Activated T-helper 1 cell treated with anti-CD3 and anti-CD28 coated beads, Interleukin-12 subunit alpha, Interleukin-12 subunit beta, Interleukin-2, Interleukin-4 antibody, amounts not matched to agents 30 ng/mL and 10 ng/mL and 1 ng/mL, durations not matched to agents 14 hours and 24 hours and 36 hours (primary cell): ENCODE measurements at regions of chr1 and their contacts with region 1.

Region 1: DNA sequence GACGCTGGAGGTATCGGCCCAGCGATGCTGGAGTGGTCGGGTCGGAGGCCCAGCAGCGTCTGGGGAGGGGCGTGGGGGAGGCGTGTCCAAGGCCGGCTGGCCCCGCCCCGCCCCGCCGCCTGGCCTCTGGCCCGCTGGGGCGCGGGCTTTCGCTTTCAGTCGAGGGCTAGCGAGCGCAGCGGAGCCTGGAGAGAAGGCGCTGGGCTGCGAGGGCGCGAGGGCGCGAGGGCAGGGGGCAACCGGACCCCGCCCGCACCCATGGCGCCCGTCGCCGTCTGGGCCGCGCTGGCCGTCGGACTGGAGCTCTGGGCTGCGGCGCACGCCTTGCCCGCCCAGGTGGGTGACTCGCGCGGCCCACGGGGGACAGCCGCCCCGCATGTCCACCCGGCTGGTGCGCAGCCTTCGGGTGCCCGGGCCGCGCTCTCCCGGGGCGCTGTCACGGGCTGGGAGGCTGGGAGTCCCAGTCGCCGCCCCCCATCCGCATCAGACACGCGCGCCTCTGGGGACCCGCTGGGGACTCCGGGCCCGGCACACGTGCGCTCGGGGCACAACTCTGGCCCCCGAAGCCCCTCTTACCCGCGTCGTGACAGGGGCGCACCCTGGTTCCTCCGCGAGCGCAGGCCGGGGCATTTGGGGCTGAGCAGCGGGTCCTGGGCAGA is at the start of gene TNFRSF1B:
- DNase-seq: peak; percentile 74
- H3K4me3 Mint-ChIP-seq: peak within 1 kb of the TSS; percentile 100
- H3K27ac Mint-ChIP-seq: peak within 1 kb of the TSS; percentile 99
- H3K4me1 Mint-ChIP-seq: peaks cover 85% of the 10 kb centered on the region
- H3K27me3 Mint-ChIP-seq: no peaks in the 10 kb centered on the region
- total RNA-seq, gene TNFRSF1B: 211 and 213 TPM in 2 replicates

Region 2: DNA sequence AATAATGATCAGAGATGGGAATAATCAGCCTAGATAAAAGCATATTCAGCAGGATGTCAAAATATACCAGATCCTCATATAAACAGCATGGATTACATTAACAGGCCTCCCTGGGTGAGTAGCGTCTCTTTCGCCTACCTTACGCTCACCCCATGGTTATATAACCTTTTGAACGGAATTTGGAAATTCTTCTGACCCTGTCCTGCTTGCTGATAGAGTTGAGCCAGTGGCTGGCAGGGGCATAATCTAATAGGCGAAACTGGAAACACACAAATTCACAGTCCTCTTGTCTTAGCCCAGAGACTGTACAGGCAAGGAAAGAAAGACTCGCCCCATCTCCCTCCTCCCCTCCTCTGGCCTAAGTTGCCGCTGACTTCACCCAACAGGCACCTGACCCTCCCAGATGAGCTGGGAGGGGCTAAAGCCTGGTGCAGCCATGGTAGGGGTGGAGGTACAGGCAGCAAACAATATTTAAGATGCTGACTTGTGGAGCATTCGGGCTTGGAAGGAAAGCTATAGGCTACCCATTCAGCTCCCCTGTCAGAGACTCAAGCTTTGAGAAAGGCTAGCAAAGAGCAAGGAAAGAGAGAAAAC is 978.0 kb before region 1 on chr1 and contains the start of gene ANGPTL7:
- intact Hi-C with region 1: no loop called
- DNase-seq: no peak
- H3K4me3 Mint-ChIP-seq: no peak within 1 kb of the TSS
- H3K27ac Mint-ChIP-seq: no peak within 1 kb of the TSS
- H3K4me1 Mint-ChIP-seq: no peaks in the 10 kb centered on the region
- H3K27me3 Mint-ChIP-seq: no peaks in the 10 kb centered on the region
- total RNA-seq, gene ANGPTL7: not detected in 2 replicates

Region 3: GRCh38 chr1:11237356-11237755 is 929.6 kb before region 1 on chr1:
- intact Hi-C with region 1: no loop called
- DNase-seq: no peak
- H3K4me3 Mint-ChIP-seq: no peak overlapping the region
- H3K27ac Mint-ChIP-seq: no peak overlapping the region
- H3K4me1 Mint-ChIP-seq: peaks cover 9% of the 10 kb centered on the region
- H3K27me3 Mint-ChIP-seq: no peaks in the 10 kb centered on the region

Region 4: DNA sequence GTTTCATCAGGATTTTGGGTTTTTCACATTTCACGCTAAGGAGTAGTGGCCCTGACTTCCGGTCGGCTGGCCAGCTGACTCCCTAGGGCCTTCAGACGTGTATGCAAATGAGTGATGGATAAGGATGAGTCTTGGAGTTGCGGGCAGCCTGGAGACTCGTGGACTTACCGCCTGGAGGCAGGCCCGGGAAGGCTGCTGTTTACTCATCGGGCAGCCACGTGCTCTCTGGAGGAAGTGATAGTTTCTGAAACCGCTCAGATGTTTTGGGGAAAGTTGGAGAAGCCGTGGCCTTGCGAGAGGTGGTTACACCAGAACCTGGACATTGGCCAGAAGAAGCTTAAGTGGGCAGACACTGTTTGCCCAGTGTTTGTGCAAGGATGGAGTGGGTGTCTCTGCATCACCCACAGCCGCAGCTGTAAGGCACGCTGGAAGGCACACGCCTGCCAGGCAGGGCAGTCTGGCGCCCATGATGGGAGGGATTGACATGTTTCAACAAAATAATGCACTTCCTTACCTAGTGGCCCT is 23.3 kb before region 1 on chr1:
- intact Hi-C with region 1: loop called (anchors 1 kb)
- DNase-seq: no peak
- H3K4me3 Mint-ChIP-seq: peak overlapping the region; percentile 43
- H3K27ac Mint-ChIP-seq: peak overlapping the region; percentile 63
- H3K4me1 Mint-ChIP-seq: peaks cover 51% of the 10 kb centered on the region
- H3K27me3 Mint-ChIP-seq: no peaks in the 10 kb centered on the region

Region 5: GRCh38 chr1:12177999-12178441 is 11.1 kb after region 1 on chr1:
- intact Hi-C with region 1: loop called (anchors 1 kb)
- DNase-seq: peak; percentile 62
- H3K4me3 Mint-ChIP-seq: peak overlapping the region; percentile 79
- H3K27ac Mint-ChIP-seq: peak overlapping the region; percentile 96
- H3K4me1 Mint-ChIP-seq: peaks cover 84% of the 10 kb centered on the region
- H3K27me3 Mint-ChIP-seq: no peaks in the 10 kb centered on the region

Region 6: DNA sequence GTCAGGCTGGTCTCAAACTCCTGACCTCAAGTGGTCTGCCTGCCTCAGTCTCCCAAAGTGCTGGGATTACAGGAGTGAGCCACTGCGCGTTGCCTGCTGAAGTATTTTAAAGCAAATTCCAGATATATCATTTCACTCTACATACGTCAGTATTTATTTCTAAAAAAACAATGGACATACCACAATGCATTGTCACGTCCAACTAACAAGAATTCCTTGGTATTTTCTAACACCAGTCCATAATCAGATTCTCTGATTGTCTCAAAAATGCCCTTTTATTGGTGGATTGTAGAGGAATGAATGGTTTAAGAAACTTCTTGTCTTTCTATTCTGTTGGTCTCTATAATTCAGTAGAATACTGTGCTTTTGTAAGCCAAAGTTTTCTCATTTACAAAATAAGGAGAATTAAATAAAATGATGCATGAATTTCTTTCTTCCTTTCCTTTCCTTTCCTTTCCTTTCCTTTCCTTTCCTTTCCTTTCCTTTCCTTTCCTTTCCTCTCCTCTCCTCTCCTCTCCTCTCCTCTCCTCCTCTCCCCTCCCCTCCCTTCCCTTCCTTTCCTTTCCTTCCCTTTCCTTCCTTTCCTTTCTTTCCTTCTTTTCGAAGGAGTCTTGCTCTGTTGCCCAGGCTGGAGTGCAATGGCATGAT is 118.7 kb after region 1 on chr1:
- intact Hi-C with region 1: no loop called
- DNase-seq: no peak
- H3K4me3 Mint-ChIP-seq: no peak overlapping the region
- H3K27ac Mint-ChIP-seq: no peak overlapping the region
- H3K4me1 Mint-ChIP-seq: peaks cover 6% of the 10 kb centered on the region
- H3K27me3 Mint-ChIP-seq: no peaks in the 10 kb centered on the region

Region 7: GRCh38 chr1:12810691-12811408 is 643.9 kb after region 1 on chr1:
- intact Hi-C with region 1: no loop called
- DNase-seq: no peak
- H3K4me3 Mint-ChIP-seq: no peak overlapping the region
- H3K27ac Mint-ChIP-seq: no peak overlapping the region
- H3K4me1 Mint-ChIP-seq: no peaks in the 10 kb centered on the region
- H3K27me3 Mint-ChIP-seq: peaks cover 4% of the 10 kb centered on the region